Breast epithelium (tissue), 4 donors: ENCODE measurements at regions of chr1 and their contacts with region 1.

Region 1: DNA sequence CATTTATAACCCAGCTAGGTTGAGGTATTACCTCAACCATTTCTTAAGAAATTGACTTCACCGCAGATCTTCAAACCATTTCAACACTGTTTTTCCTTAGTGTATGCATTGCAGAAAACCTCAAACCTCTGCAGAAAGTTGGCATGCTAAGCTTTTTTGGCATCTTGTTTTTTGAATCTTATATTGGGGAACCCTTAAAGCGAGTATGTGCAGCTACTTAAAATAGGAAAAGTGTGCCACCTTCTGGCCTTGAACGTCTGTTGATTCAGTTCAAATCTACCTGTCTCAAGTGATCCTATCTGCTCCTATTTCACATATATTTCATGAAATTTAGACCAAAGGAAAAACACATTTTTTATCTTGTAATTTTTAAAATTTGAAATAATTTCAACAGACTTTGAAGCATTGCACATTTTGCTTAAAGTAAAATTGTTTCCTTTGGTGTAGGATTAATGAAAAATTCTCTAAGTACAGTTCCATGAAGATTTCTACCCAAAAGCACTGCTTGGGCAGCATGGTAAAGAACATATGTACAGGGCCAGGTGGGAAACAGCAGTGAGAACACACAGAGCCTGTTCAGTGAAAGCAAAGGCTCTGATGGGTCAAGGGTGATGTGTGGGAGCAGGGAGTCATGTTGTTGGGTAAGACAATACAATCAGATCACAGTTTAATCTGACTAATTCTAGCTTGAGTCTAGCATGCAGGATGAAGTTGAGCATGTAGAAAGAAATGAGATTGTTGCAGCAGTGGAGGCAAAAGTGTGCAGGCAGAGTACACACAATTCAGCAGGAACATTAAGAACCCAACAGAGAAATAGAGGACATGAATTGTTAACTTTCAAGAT is 17.2 kb downstream of the HENMT1 start:
- DNase-seq: peak in 1 of 2 donors; percentile 54
- H3K4me3 ChIP-seq: no peak overlapping the region
- H3K27ac ChIP-seq: no peak overlapping the region
- H3K4me1 ChIP-seq: peaks cover 0 to 5% of the 10 kb centered on the region in 2 donors
- H3K27me3 ChIP-seq: no peaks in the 10 kb centered on the region
- CTCF ChIP-seq: peak; percentile 56 to 76 (median 75)
- POLR2A ChIP-seq: no peak

Region 2: DNA sequence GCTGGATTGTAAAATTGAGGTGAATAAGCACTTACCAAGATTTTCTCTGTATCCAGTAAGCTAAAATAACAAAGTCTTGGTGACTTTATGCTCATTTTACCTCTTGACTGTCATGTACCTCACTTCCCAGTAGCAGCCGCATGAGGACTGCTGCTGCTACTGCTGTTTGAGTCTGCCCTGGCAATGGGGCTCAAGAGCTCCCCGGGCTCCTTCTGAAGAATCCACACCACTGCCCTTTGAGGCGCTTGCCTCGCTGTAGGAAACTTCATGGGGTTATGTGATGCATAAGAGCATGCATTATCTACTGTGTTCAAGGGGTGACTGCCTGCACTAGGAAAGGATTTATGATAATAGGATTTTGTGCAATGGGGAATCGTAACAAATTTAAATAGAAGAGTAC is 1389.4 kb before region 1 on chr1:
- intact Hi-C with region 1: no loop called
- DNase-seq: no peak
- H3K4me3 ChIP-seq: no peak overlapping the region
- H3K27ac ChIP-seq: no peak overlapping the region
- H3K4me1 ChIP-seq: no peaks in the 10 kb centered on the region
- H3K27me3 ChIP-seq: no peaks in the 10 kb centered on the region
- CTCF ChIP-seq: no peak
- POLR2A ChIP-seq: no peak

Region 3: GRCh38 chr1:108512239-108512981 is 131.3 kb before region 1 on chr1:
- intact Hi-C with region 1: loop called (anchors 10 kb)
- DNase-seq: no peak
- H3K4me3 ChIP-seq: no peak overlapping the region
- H3K27ac ChIP-seq: no peak overlapping the region
- H3K4me1 ChIP-seq: no peaks in the 10 kb centered on the region
- H3K27me3 ChIP-seq: no peaks in the 10 kb centered on the region
- CTCF ChIP-seq: peak; percentile 59 to 89 (median 81)
- POLR2A ChIP-seq: no peak